ENCODE measurements at regions of chr7 and their contacts with region 1.

Region 1: DNA sequence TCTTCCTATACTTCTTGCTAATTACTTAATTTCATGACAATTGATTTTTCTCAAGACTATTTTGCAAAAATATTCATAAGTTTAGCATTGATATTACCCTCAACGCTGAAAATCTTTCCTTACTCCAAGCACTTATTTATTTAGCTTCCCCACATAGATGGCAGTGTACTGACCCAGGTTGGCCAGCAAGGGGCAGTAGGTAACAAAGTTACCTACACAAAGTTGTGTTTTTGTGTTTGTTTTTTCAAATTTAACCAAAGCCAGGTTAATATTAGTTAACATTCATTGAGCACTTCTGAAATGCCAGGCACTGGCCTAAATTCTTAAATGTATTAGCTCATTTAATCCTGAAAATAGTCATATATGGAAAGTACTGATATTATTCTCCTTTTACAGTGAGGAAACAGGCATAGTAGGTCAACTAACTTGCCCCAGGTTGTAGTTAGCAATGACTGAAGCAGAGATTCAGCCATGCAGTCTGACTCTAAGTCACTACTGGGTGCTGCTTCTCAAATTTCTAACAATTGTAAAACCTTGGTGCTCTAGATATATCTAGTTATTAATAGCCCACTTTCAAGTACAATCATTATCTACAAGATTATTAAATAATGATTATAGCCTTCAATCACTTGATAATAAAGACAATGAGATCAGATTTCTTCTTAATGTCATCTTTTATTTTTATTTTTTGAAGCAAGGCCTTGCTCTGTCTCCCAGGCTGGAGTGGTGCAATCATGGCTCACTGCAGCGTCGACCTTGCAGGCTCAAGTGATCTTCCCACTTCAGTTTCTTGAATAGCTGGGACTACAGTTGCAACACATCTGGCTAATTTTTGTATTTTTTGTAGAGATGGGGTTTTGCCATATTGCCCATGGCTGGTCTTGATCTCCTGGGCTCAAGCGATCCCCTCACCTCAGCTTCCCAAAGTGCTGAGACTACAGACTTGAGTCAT is 5.8 kb upstream of the GGCT start:
- DNase-seq: peak; percentile 46
- H3K4me3 Mint-ChIP-seq: no peak overlapping the region
- H3K27ac Mint-ChIP-seq: no peak overlapping the region
- H3K4me1 Mint-ChIP-seq: peaks cover 9% of the 10 kb centered on the region
- H3K27me3 Mint-ChIP-seq: no peaks in the 10 kb centered on the region

Region 2: GRCh38 chr7:30521532-30521931 is 11.1 kb after region 1 on chr7:
- CTCF ChIA-PET with region 1: interaction called, 19 read pairs
- POLR2A ChIA-PET with region 1: no interaction called
- intact Hi-C with region 1: no loop called
- DNase-seq: peak; percentile 32
- H3K4me3 Mint-ChIP-seq: no peak overlapping the region
- H3K27ac Mint-ChIP-seq: peak overlapping the region; percentile 51
- H3K4me1 Mint-ChIP-seq: peaks cover 16% of the 10 kb centered on the region
- H3K27me3 Mint-ChIP-seq: no peaks in the 10 kb centered on the region

Region 3: GRCh38 chr7:30548762-30549344 is 38.5 kb after region 1 on chr7:
- CTCF ChIA-PET with region 1: interaction called, 13 read pairs
- POLR2A ChIA-PET with region 1: no interaction called
- intact Hi-C with region 1: no loop called
- DNase-seq: peak; percentile 51
- H3K4me3 Mint-ChIP-seq: no peak overlapping the region
- H3K27ac Mint-ChIP-seq: no peak overlapping the region
- H3K4me1 Mint-ChIP-seq: no peaks in the 10 kb centered on the region
- H3K27me3 Mint-ChIP-seq: no peaks in the 10 kb centered on the region

Region 4: GRCh38 chr7:30824821-30825720 is 314.7 kb after region 1 on chr7:
- CTCF ChIA-PET with region 1: no interaction called
- POLR2A ChIA-PET with region 1: no interaction called
- intact Hi-C with region 1: no loop called
- DNase-seq: no peak
- H3K4me3 Mint-ChIP-seq: no peak overlapping the region
- H3K27ac Mint-ChIP-seq: no peak overlapping the region
- H3K4me1 Mint-ChIP-seq: no peaks in the 10 kb centered on the region
- H3K27me3 Mint-ChIP-seq: no peaks in the 10 kb centered on the region